ENCODE measurements at regions of chr6 and their contacts with region 1.

Region 1: GRCh38 chr6:154805288-154805911 is 72.2 kb downstream of the SCAF8 start:
- DNase-seq: no peak
- H3K4me3 ChIP-seq: no peak overlapping the region
- H3K27me3 ChIP-seq: no peaks in the 10 kb centered on the region
- CTCF ChIP-seq: peak; percentile 50

Region 2: GRCh38 chr6:154675602-154676088 is 129.8 kb before region 1 on chr6:
- CTCF ChIA-PET with region 1: interaction called, 104 read pairs
- POLR2A ChIA-PET with region 1: interaction called, 3 read pairs
- DNase-seq: peak; percentile 90
- H3K4me3 ChIP-seq: no peak overlapping the region
- H3K27me3 ChIP-seq: no peaks in the 10 kb centered on the region
- CTCF ChIP-seq: peak; percentile 99

Region 3: GRCh38 chr6:154766288-154766687 is 39.1 kb before region 1 on chr6:
- CTCF ChIA-PET with region 1: no interaction called
- POLR2A ChIA-PET with region 1: interaction called, 14 read pairs
- DNase-seq: no peak
- H3K4me3 ChIP-seq: no peak overlapping the region
- H3K27me3 ChIP-seq: no peaks in the 10 kb centered on the region
- CTCF ChIP-seq: no peak

Region 4: GRCh38 chr6:154847318-154847717 is 41.9 kb after region 1 on chr6:
- CTCF ChIA-PET with region 1: no interaction called
- POLR2A ChIA-PET with region 1: no interaction called
- DNase-seq: peak; percentile 3
- H3K4me3 ChIP-seq: no peak overlapping the region
- H3K27me3 ChIP-seq: no peaks in the 10 kb centered on the region
- CTCF ChIP-seq: no peak

Region 5: DNA sequence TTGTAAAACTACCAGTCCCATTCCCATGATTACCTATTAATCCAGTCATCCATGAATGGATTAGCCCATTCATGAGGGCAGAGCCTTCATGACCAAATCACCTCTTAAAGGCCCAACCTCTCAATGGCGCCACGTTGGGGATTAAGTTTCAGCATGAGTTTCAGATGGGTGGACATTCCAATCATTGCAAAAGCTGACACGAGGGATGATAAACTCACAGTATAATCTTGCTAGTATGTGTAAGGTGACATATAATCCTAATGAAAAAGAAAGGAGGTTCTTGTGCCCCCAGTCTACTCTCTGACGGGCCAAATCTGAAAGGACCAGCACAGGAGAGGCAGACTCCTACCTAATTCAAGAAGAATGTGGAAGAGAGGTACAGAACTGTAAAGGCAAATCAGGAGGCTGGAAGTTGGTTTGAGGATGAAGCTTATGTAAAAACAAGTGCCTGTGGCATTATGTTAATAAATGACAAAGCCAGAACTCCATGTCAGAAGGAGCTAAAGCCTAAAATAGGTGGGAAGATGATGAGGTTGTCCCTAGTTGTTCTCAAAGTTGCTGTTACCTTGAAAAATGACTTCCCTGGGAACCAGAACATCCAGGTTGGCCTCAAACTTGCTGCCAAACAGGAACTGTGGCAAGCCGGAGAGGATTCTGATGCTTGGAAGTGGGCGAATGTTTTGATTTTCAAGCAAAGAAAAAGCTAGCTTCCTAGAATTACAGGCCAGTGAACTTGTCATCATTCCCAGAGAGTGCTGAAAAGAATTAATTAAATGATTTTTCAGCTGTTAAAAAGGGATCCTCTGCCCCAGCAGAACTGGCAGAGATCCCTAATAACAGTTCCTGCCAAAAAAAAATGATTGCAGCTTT is 83.3 kb after region 1 on chr6:
- CTCF ChIA-PET with region 1: no interaction called
- POLR2A ChIA-PET with region 1: no interaction called
- DNase-seq: no peak
- H3K4me3 ChIP-seq: no peak overlapping the region
- H3K27me3 ChIP-seq: no peaks in the 10 kb centered on the region
- CTCF ChIP-seq: no peak